HCT116 (cell line): ENCODE measurements at regions of chr9 and their contacts with region 1.

Region 1: DNA sequence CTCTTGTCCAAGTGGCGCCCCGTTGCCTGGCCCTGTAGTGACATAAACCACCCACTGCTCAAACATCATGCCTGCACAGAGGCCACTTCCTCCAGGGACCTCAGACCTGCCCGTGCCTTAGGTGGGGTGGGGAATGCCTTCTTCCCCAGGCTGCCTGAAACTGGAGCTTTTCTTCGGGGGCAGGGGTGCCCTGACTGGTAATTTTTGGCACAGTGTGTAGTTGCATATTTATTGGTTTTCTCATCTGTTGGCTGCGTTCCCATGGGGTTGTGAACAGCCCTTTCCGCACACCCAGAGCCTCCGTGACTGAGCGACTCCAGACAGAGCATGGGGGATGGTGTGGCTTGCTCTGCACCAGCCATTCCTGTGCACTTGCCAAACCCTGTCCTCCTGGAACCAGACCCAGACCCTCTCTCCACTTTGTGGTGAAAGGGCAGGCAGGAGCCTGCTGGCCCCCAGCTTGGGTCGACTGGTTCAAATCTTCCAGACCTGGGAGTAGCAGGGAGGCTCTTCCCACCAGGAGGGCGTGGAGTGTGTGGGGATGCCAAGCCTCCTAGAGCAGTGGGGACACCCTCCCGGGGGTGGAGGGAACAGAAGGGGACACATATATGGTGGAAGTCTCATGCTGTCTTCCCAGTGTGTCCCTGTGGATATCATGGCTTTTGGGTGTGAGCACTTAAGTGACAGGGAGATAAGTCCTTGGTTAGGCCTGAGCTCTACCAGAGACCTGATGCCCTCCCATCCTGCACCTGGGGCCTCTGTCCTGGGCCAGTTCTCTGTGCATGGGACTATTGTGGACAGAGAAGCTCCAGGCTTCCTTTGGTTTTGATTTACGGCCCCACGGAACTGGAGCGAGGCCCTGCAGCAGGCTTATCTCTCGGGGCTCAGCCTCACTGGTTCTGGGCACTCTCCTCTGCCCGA is 39.6 kb downstream of the WNK2 start:
- DNase-seq: peak; percentile 56
- ATAC-seq: peak; percentile 86
- H3K4me3 ChIP-seq: peak overlapping the region in 1 of 2 experiments; percentile 47; a peak in 2 of 4 replicates
- H3K27ac ChIP-seq: peak overlapping the region; percentile 73
- H3K4me1 ChIP-seq: peaks cover 38 to 46% of the 10 kb centered on the region in 2 experiments
- H3K27me3 ChIP-seq: no peaks in the 10 kb centered on the region
- CTCF ChIP-seq: no peak
- POLR2A ChIP-seq: no peak
- RAD21 ChIP-seq: no peak

Region 2: DNA sequence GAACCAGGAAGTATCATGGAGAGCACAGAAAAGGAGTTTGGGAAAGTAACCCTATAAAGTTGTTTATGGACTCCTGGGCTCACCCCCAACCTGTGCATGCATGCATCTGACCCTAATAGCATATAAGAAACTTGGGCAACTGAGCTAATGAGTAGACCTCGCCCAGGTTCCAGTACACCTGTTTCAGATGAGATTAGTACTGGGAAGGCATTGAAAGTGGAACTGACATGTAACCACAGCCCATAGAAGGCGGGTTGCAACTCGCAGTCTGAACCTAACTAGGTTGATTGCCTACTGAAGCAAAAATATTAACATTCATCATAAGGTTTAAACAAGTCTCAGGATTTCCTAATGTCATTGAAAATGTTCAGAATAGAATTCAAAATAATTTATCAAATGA is 47.5 kb after region 1 on chr9:
- CTCF ChIA-PET with region 1: no interaction called
- POLR2A ChIA-PET with region 1: no interaction called
- RAD21 ChIA-PET with region 1: no interaction called
- intact Hi-C with region 1: loop called (anchors 5 kb)
- DNase-seq: no peak
- ATAC-seq: no peak
- H3K4me3 ChIP-seq: no peak overlapping the region
- H3K27ac ChIP-seq: no peak overlapping the region
- H3K4me1 ChIP-seq: no peaks in the 10 kb centered on the region
- H3K27me3 ChIP-seq: no peaks in the 10 kb centered on the region
- CTCF ChIP-seq: no peak
- POLR2A ChIP-seq: no peak
- RAD21 ChIP-seq: no peak